HepG2 (cell line): ENCODE measurements at regions of chr12 and their contacts with region 1.

Region 1: DNA sequence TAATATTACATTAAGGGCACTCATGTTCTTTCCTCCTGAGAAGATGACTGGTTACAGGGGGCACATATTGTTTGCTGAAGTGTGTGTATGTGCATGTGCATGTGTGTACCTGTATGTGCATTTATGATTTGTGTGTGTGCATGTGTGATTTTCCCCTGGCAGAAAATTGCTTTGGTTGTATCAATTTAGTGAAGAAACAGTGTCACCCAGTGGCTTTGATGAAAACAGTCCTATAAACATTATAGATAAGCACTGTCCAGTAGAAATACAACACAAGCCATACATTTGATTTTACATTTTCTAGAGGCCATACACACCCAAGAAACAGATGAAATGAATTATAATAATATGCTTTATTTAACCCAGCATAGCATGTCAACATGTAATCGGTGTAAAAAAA is 8.6 kb downstream of the PDE3A start:
- DNase-seq: no peak
- ATAC-seq: no peak
- H3K4me3 ChIP-seq: no peak overlapping the region
- H3K27ac ChIP-seq: no peak overlapping the region
- H3K4me1 ChIP-seq: no peaks in the 10 kb centered on the region
- H3K27me3 ChIP-seq: no peaks in the 10 kb centered on the region
- CTCF ChIP-seq: peak; percentile 45
- EP300 ChIP-seq: no peak
- POLR2A ChIP-seq: no peak
- RAD21 ChIP-seq: no peak

Region 2: DNA sequence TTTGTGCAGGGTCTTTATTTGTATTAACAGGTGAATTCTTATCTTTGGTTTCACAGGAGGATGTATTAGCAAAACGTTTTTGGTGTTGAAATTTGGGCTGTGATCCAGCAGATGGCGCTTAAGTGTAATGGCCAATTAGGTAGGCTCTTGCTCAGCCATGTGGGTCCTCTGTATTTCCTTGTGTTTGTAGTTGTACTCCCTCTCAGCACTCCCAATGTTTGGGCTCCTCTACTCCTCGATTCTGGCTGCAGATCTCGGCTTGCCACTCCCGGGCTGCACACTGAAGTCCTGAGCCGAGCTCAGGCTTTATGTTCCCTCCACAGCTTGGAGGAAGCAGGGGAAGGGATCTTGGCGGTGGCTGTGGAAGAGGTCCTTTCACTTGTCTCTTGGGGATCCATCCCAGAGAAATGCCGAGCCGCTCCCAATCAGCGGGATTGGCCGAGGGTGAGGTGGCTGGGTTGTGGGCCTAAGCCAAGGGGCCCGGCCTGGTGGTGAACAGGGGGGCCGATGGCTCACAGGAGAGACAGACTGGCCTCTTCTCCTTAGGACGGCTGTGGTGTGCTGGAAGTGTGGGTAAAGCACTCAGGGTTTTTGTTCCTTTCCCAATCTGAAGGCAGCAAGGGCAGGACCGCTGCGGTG is 803.9 kb before region 1 on chr12:
- CTCF ChIA-PET with region 1: interaction called, 3 read pairs
- POLR2A ChIA-PET with region 1: no interaction called
- in situ Hi-C with region 1: no loop called
- intact Hi-C with region 1: loop called (anchors 2 kb)
- DNase-seq: peak; percentile 45
- ATAC-seq: peak; percentile 89
- H3K4me3 ChIP-seq: no peak overlapping the region
- H3K27ac ChIP-seq: no peak overlapping the region
- H3K4me1 ChIP-seq: no peaks in the 10 kb centered on the region
- H3K27me3 ChIP-seq: no peaks in the 10 kb centered on the region
- CTCF ChIP-seq: peak; percentile 69
- EP300 ChIP-seq: no peak
- POLR2A ChIP-seq: no peak
- RAD21 ChIP-seq: no peak

Region 3: DNA sequence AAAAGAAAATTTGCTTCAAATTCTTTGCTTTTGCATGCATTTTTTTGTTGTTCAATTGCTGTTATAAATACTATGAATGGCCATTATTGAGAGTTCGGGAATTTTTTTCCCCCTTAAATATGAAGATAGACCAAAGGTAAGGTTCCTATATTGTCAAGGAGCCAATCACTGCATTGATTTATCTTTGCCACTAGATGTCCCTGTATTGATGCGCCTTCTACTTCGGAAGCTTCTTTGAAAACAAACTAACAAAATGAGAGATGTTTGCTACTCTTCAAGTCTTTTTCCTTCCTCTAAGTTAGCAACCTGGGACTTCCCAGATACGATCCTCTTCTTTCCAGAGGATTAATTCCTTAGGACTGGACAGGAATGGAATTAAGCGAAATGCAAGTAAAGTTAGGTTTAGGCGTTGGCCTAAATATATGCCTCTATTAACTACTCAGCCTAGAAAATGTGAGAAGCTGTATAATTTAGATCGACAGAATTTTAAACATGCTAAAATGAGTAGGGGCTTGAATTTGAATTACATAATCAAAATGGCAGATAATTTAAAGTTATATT is 619.6 kb before region 1 on chr12:
- CTCF ChIA-PET with region 1: no interaction called
- POLR2A ChIA-PET with region 1: no interaction called
- in situ Hi-C with region 1: no loop called
- intact Hi-C with region 1: loop called (anchors 5 kb)
- DNase-seq: no peak
- ATAC-seq: peak; percentile 49; the same call in 1 of the 3 replicates
- H3K4me3 ChIP-seq: no peak overlapping the region
- H3K27ac ChIP-seq: no peak overlapping the region
- H3K4me1 ChIP-seq: no peaks in the 10 kb centered on the region
- H3K27me3 ChIP-seq: no peaks in the 10 kb centered on the region
- CTCF ChIP-seq: peak; percentile 62
- EP300 ChIP-seq: no peak
- POLR2A ChIP-seq: no peak
- RAD21 ChIP-seq: no peak